Mammary epithelial cell (primary cell): ENCODE measurements at regions of chr20 and their contacts with region 1.

Region 1: DNA sequence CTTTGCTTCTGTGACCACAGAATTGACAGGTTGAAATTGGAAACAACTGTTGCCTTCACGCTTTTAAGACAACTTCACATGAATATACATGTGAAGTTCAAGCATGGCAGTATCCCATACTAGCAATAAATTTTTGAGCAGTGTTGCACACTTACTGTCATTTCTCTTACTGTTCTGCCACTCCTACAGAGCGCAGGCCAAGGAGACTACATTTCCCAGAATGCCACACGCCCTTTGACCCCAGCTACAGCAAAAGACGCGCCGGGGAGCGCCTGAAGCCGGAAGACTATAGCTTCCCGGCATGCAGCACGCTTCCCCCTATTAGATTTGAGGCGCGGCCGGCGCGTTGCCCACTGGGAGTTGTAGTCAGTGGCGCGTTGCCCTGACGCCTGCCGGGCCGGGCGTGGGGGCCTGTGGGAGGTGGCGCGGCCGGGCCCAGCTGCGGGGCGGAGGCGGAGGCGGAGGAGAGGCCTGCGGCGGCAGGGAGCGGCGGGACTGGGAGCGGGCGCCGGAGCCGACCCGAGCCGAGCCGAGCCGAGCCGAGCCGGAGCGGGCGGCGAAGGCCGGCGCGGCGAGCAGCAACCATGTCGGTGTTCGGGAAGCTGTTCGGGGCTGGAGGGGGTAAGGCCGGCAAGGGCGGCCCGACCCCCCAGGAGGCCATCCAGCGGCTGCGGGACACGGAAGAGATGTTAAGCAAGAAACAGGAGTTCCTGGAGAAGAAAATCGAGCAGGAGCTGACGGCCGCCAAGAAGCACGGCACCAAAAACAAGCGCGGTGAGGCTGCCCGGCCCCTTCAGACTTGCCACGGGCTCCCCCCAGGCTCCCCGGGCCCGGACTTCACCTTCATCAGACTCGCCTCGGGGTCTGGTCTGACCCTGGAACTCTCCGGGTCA is at the start of gene CHMP4B:
- DNase-seq: peak; percentile 98
- H3K4me3 ChIP-seq: peak within 1 kb of the TSS; percentile 72 to 86 (median 81)
- H3K27ac ChIP-seq: peak within 1 kb of the TSS; percentile 97
- H3K4me1 ChIP-seq: peaks cover 8% of the 10 kb centered on the region
- H3K27me3 ChIP-seq: no peaks in the 10 kb centered on the region
- CTCF ChIP-seq: no peak
- total RNA-seq, gene CHMP4B: 24.2 to 72.4 TPM

Region 2: GRCh38 chr20:33789109-33789854 is 21.8 kb before region 1 on chr20:
- CTCF ChIA-PET with region 1: no interaction called
- dilution Hi-C with region 1: no loop called
- in situ Hi-C with region 1: no loop called
- intact Hi-C with region 1: loop called (anchors 2 kb)
- DNase-seq: peak; percentile 98
- H3K4me3 ChIP-seq: no peak overlapping the region
- H3K27ac ChIP-seq: no peak overlapping the region
- H3K4me1 ChIP-seq: peaks cover 27% of the 10 kb centered on the region
- H3K27me3 ChIP-seq: no peaks in the 10 kb centered on the region
- CTCF ChIP-seq: no peak

Region 3: GRCh38 chr20:33896509-33896908 is 85.4 kb after region 1 on chr20:
- CTCF ChIA-PET with region 1: no interaction called
- dilution Hi-C with region 1: no loop called
- in situ Hi-C with region 1: no loop called
- intact Hi-C with region 1: no loop called
- DNase-seq: no peak
- H3K4me3 ChIP-seq: no peak overlapping the region
- H3K27ac ChIP-seq: no peak overlapping the region
- H3K4me1 ChIP-seq: no peaks in the 10 kb centered on the region
- H3K27me3 ChIP-seq: no peaks in the 10 kb centered on the region
- CTCF ChIP-seq: no peak